ENCODE measurements at regions of chr1 and their contacts with region 1.

Region 1: GRCh38 chr1:202501281-202501680 is 152.8 kb downstream of the PPP1R12B start:
- DNase-seq: no peak
- ATAC-seq: peak; percentile 75
- H3K4me3 Mint-ChIP-seq: no peak overlapping the region
- H3K27ac Mint-ChIP-seq: 0 out of 2 replicates have a peak overlapping the region, but pooled peaks have one; percentile 4
- H3K4me1 Mint-ChIP-seq: peaks cover 7% of the 10 kb centered on the region
- H3K27me3 Mint-ChIP-seq: no peaks in the 10 kb centered on the region
- CTCF ChIP-seq: no peak

Region 2: DNA sequence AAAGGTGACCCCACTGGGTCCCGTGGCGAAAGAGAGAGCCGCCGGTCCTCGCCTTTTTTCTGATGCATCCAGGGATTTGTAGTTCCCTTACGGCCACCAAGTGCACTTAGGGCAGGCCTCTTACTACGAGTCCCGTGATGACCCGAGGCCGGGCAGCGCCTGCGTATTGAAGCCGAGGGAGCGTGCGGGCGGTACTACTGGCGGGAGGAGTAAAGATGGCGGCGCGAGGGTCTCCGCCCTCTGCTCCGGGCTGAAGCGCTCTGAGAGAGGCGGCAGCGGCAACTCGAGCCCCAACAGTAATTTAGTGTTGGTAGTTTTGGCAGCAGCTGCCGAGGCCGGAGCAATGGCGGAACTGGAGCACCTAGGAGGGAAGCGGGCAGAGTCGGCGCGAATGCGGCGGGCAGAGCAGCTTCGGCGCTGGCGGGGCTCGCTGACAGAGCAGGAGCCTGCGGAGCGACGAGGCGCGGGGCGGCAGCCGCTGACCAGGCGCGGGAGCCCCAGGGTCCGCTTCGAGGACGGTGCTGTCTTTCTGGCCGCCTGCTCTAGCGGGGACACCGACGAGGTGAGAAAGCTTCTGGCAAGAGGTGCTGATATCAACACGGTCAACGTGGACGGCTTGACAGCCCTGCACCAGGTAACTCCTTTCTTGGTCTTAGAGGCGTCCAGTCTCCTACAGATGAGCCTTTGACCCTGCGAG is 152.6 kb before region 1 on chr1 and contains the start of gene PPP1R12B:
- CTCF ChIA-PET with region 1: no interaction called
- POLR2A ChIA-PET with region 1: no interaction called
- DNase-seq: peak; percentile 98
- ATAC-seq: peak; percentile 98
- H3K4me3 Mint-ChIP-seq: peak within 1 kb of the TSS; percentile 85
- H3K27ac Mint-ChIP-seq: peak within 1 kb of the TSS; percentile 90
- H3K4me1 Mint-ChIP-seq: peaks cover 18% of the 10 kb centered on the region
- H3K27me3 Mint-ChIP-seq: no peaks in the 10 kb centered on the region
- CTCF ChIP-seq: no peak
- total RNA-seq, gene PPP1R12B: 19.2 to 22.6 TPM (median 19.8 TPM) in 3 replicates

Region 3: DNA sequence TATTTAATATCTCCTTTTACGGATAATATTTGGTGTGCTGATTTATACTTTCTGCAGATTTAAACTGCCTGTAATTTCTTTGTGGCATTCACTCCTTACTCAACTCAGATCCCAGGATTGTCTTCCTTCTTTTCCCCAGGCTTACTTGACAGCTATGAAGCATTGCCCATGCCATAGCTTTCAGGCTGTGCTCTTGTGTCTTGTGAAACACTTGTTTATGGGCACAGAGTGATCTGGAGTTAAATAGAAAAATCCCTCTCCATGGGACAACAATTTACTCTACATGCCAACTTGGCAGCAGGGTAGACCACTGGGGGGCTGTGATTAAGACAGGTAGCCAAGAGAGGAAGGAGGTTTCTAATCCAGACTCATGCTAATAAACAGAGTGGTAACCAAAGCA is 95.4 kb before region 1 on chr1:
- CTCF ChIA-PET with region 1: no interaction called
- POLR2A ChIA-PET with region 1: no interaction called
- DNase-seq: no peak
- ATAC-seq: no peak
- H3K4me3 Mint-ChIP-seq: no peak overlapping the region
- H3K27ac Mint-ChIP-seq: no peak overlapping the region
- H3K4me1 Mint-ChIP-seq: peaks cover 27% of the 10 kb centered on the region
- H3K27me3 Mint-ChIP-seq: no peaks in the 10 kb centered on the region
- CTCF ChIP-seq: no peak

Region 4: GRCh38 chr1:202522983-202523382 is 21.7 kb after region 1 on chr1:
- CTCF ChIA-PET with region 1: no interaction called
- POLR2A ChIA-PET with region 1: no interaction called
- DNase-seq: no peak
- ATAC-seq: no peak
- H3K4me3 Mint-ChIP-seq: no peak overlapping the region
- H3K27ac Mint-ChIP-seq: no peak overlapping the region
- H3K4me1 Mint-ChIP-seq: no peaks in the 10 kb centered on the region
- H3K27me3 Mint-ChIP-seq: no peaks in the 10 kb centered on the region
- CTCF ChIP-seq: no peak

Region 5: GRCh38 chr1:202571347-202572339 is 70.4 kb after region 1 on chr1:
- CTCF ChIA-PET with region 1: interaction called, 11 read pairs
- POLR2A ChIA-PET with region 1: no interaction called
- DNase-seq: peak; percentile 44
- ATAC-seq: peak; percentile 55; the same call in 1 of the 2 replicates
- H3K4me3 Mint-ChIP-seq: no peak overlapping the region
- H3K27ac Mint-ChIP-seq: 0 out of 2 replicates have a peak overlapping the region, but pooled peaks have one; percentile 38
- H3K4me1 Mint-ChIP-seq: peaks cover 40% of the 10 kb centered on the region
- H3K27me3 Mint-ChIP-seq: no peaks in the 10 kb centered on the region
- CTCF ChIP-seq: peak; percentile 74